Vagina (tissue), 2 donors: ENCODE measurements at regions of chr3 and their contacts with region 1.

Region 1: GRCh38 chr3:155241579-155241978 is 51.9 kb downstream of the STRIT1 start:
- DNase-seq: no peak
- H3K4me3 ChIP-seq: no peak overlapping the region
- H3K27ac ChIP-seq: no peak overlapping the region
- H3K4me1 ChIP-seq: no peaks in the 10 kb centered on the region
- H3K27me3 ChIP-seq: no peaks in the 10 kb centered on the region
- CTCF ChIP-seq: no peak
- POLR2A ChIP-seq: no peak

Region 2: GRCh38 chr3:156582784-156583183 is 1341.2 kb after region 1 on chr3:
- intact Hi-C with region 1: loop called (anchors 5 kb)
- DNase-seq: no peak
- H3K4me3 ChIP-seq: no peak overlapping the region
- H3K27ac ChIP-seq: no peak overlapping the region
- H3K4me1 ChIP-seq: peaks cover 6% of the 10 kb centered on the region
- H3K27me3 ChIP-seq: no peaks in the 10 kb centered on the region
- CTCF ChIP-seq: no peak
- POLR2A ChIP-seq: no peak